Breast epithelium (tissue), 4 donors: ENCODE measurements at regions of chr5 and their contacts with region 1.

Region 1: DNA sequence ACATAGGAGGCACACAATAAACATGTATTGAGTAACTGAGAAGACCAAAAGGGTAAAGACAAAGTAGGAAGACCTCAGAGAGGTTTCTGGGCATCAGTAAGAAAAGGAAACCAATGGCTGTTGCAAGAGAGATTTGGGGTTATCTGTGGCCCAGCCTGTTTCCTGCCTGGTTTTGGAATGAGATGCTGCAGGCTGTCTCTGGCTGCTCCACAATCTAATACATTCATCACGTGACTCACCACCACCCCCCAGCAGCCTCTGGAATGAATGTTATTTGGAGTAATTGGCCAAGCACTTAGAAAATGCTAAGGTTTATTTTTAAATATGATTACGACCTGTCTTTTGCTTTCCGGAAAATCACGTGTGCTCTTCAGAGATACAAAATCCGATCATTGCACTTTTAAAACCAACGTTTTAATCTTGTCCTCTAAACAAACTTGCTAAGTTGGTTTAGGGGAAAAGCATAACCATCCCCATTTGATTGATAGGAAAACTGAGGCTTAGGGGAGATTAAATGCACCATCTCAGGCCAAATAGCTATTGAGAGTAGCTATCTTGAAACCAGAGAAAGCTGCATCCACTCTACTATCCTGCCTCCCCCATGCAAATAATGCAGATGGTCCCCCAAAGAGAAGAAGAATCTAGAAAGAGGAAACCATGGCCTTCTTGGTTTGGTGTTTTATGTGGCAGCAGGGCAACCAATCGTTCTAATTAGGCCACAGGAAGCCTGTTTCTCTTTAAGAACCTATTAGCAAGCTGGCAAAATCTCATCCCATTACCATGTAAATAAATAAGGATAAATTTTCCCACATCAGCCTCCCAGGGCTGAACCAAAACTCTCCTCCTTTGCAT is 151.8 kb upstream of the ADRA1B start:
- DNase-seq: no peak
- H3K4me3 ChIP-seq: no peak overlapping the region
- H3K27ac ChIP-seq: no peak overlapping the region
- H3K4me1 ChIP-seq: no peaks in the 10 kb centered on the region
- H3K27me3 ChIP-seq: no peaks in the 10 kb centered on the region
- CTCF ChIP-seq: no peak
- POLR2A ChIP-seq: no peak

Region 2: DNA sequence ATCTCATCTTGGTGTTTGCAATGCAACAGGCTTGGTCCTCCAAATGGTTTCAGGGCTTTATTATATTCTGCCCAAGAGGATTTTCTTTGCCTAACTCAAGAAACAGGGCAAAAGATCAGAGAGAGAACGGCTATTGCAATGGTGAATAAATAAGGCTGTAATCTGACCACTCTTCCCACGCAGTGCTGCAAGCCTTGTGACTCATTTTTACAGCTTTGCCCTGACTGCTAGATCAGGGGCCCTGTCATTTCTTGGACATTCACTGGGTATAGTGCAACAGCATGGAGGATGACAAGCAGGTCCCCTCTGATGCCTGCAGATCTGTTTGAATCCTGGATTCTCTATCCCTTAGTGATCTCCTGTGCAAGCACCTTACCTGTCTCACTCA is 1123.9 kb before region 1 on chr5:
- intact Hi-C with region 1: loop called (anchors 5 kb)
- DNase-seq: no peak
- H3K4me3 ChIP-seq: no peak overlapping the region
- H3K27ac ChIP-seq: no peak overlapping the region
- H3K4me1 ChIP-seq: no peaks in the 10 kb centered on the region
- H3K27me3 ChIP-seq: no peaks in the 10 kb centered on the region
- CTCF ChIP-seq: no peak
- POLR2A ChIP-seq: no peak

Region 3: DNA sequence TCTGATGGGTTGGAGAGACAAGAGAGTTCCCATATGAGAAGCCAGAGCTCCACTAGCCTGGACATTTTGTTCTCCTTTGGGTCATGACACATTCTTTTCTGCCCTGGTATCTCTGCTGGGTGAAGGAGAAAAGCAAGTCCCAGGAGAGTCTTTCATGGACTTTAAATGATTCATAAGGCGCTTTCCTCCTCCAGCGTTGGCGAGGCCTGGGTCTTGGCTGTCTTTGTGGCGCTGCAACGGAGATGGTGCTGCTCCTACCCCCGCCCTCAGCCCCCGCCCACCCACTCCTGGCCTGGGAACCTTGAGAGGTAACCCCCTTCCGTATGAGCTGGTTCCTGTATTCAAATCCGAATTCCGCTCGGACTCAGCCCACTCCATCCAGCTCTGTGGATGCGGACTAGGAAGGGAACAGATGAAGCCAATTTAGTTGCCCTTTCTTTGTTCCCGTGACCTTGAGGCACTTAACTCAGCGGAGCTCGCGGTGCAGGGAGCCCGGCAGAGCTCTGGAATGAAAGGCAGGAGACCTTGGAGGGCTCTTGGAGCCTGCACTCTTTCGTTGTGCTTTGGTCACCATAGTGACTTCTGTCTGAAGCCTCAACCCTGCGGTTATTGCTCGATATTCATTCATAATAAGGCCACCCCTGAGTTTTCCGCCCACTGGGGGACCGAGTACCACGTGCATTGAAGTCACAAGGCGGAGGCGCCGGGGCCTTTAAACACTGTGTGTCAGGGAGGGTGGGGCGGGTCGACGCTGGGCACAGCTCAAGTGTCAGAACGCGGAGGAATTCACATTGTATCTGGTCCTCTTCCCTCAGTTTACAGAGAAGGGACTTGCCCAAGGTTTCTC is 368.8 kb after region 1 on chr5:
- intact Hi-C with region 1: loop called (anchors 5 kb)
- DNase-seq: peak in 1 of 2 donors; percentile 25
- H3K4me3 ChIP-seq: peak overlapping the region; percentile 1 to 47 (median 27)
- H3K27ac ChIP-seq: peak overlapping the region in 1 of 2 donors; percentile 71
- H3K4me1 ChIP-seq: no peaks in the 10 kb centered on the region
- H3K27me3 ChIP-seq: no peaks in the 10 kb centered on the region
- CTCF ChIP-seq: no peak
- POLR2A ChIP-seq: no peak